CD4-positive, alpha-beta memory T cell (primary cell): ENCODE measurements at regions of chr12 and their contacts with region 1.

Region 1: DNA sequence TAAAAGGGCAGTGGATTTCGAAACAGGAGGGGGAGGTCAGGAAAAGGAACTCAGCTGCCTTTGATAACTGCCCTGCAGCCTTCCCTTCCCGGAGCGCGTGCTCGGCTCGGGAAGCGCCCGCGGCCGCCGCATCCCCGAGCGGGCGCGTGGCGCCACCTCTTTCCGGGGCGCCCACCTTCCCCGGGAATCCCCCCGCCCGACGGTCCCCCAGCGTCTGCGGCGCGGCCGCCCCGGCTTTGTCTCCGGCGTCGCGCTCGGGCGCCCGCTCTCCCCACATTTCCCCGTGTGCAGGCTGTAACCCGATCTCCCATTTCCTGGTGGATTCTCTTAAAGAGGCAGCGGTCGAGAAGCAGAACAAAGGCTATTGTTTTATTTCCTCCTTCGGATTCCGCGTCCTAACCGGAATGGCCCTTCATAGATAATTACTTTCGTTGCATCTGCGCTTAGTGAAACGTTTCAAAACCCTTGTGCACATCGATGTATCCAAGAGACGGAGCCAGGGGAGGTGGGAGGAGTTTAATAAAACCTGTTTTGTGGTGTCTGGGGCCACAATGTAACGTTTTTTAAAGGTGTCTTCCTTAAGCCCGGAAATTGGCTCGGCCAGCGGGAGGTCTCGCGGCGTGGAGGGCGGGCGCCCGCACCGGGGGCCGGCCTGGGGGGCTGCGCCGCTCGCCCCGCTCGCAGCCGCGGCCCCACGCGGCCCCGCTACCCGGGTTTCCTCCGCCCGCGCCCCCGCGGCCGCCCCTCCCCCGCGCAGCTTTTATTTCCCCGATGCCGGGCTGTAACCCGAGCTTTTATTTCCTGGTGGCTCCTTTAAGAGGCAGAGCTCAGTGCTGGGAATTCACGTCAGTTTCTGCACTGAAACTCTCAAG is at the start of gene ETV6:
- DNase-seq: peak; percentile 79 to 84 (median 81)
- H3K4me3 ChIP-seq: peak within 1 kb of the TSS; percentile 59 to 97
- H3K4me3 Mint-ChIP-seq: peak within 1 kb of the TSS; percentile 95 to 99 (median 98)
- H3K27ac ChIP-seq: peak within 1 kb of the TSS; percentile 79
- H3K27ac Mint-ChIP-seq: peak within 1 kb of the TSS; percentile 85 to 99 (median 98)
- H3K4me1 ChIP-seq: peaks cover 32% of the 10 kb centered on the region
- H3K4me1 Mint-ChIP-seq: peaks cover 24 to 48% (median 27%) of the 10 kb centered on the region in 4 donors
- H3K27me3 ChIP-seq: no peaks in the 10 kb centered on the region
- H3K27me3 Mint-ChIP-seq: no peaks in the 10 kb centered on the region
- total RNA-seq, gene ETV6: 41.3 to 43.9 TPM

Region 2: GRCh38 chr12:11621797-11622423 is 27.2 kb before region 1 on chr12:
- CTCF ChIA-PET with region 1: no interaction called
- POLR2A ChIA-PET with region 1: interaction called, 3 read pairs
- intact Hi-C with region 1: loop called (anchors 2 kb)
- DNase-seq: peak; percentile 21 to 43 (median 34)
- H3K4me3 ChIP-seq: no peak overlapping the region
- H3K4me3 Mint-ChIP-seq: no peak overlapping the region
- H3K27ac ChIP-seq: no peak overlapping the region
- H3K27ac Mint-ChIP-seq: peak overlapping the region in 2 of 7 donors; percentile 39 to 91
- H3K4me1 ChIP-seq: no peaks in the 10 kb centered on the region
- H3K4me1 Mint-ChIP-seq: peaks cover 0 to 6% (median 3%) of the 10 kb centered on the region in 4 donors
- H3K27me3 ChIP-seq: no peaks in the 10 kb centered on the region
- H3K27me3 Mint-ChIP-seq: no peaks in the 10 kb centered on the region

Region 3: GRCh38 chr12:11730299-11731041 is 81.4 kb after region 1 on chr12:
- CTCF ChIA-PET with region 1: interaction called, 3 read pairs
- POLR2A ChIA-PET with region 1: interaction called, 19 read pairs
- intact Hi-C with region 1: loop called (anchors 1 kb)
- DNase-seq: no peak
- H3K4me3 ChIP-seq: peak overlapping the region in 1 of 2 donors; percentile 14
- H3K4me3 Mint-ChIP-seq: peak overlapping the region; percentile 21 to 94 (median 82)
- H3K27ac ChIP-seq: peak overlapping the region; percentile 30
- H3K27ac Mint-ChIP-seq: peak overlapping the region; percentile 79 to 97 (median 96)
- H3K4me1 ChIP-seq: peaks cover 81% of the 10 kb centered on the region
- H3K4me1 Mint-ChIP-seq: peaks cover 60 to 85% (median 73%) of the 10 kb centered on the region in 4 donors
- H3K27me3 ChIP-seq: no peaks in the 10 kb centered on the region
- H3K27me3 Mint-ChIP-seq: no peaks in the 10 kb centered on the region

Region 4: GRCh38 chr12:11812586-11813427 is 163.7 kb after region 1 on chr12:
- CTCF ChIA-PET with region 1: interaction called, 3 read pairs
- POLR2A ChIA-PET with region 1: interaction called, 6 read pairs
- intact Hi-C with region 1: loop called (anchors 5 kb)
- DNase-seq: peak in 1 of 5 donors; percentile 30
- H3K4me3 ChIP-seq: no peak overlapping the region
- H3K4me3 Mint-ChIP-seq: peak overlapping the region; percentile 46 to 87 (median 64)
- H3K27ac ChIP-seq: no peak overlapping the region
- H3K27ac Mint-ChIP-seq: peak overlapping the region; percentile 49 to 96 (median 88)
- H3K4me1 ChIP-seq: peaks cover 49% of the 10 kb centered on the region
- H3K4me1 Mint-ChIP-seq: peaks cover 38 to 82% (median 64%) of the 10 kb centered on the region in 4 donors
- H3K27me3 ChIP-seq: no peaks in the 10 kb centered on the region
- H3K27me3 Mint-ChIP-seq: no peaks in the 10 kb centered on the region